Posterior vena cava (tissue), 2 donors: ENCODE measurements at regions of chr22 and their contacts with region 1.

Region 1: GRCh38 chr22:22133910-22134309 is 110.7 kb upstream of the VPREB1 start:
- DNase-seq: no peak

Region 2: GRCh38 chr22:22424210-22424800 is 290.4 kb after region 1 on chr22:
- intact Hi-C with region 1: loop called in 1 of 2 experiments (anchors 2 kb)
- DNase-seq: no peak